CD4-positive, alpha-beta T cell (primary cell): ENCODE measurements at regions of chr21 and their contacts with region 1.

Region 1: GRCh38 chr21:33199516-33200217 is 30.1 kb upstream of the IFNAR2 start:
- DNase-seq: peak; percentile 63 to 93 (median 75)
- ATAC-seq: peak; percentile 93
- H3K4me3 ChIP-seq: no peak overlapping the region
- H3K4me3 Mint-ChIP-seq: no peak overlapping the region
- H3K27ac ChIP-seq: no peak overlapping the region
- H3K27ac Mint-ChIP-seq: peak overlapping the region; percentile 79
- H3K4me1 ChIP-seq: peaks cover 21% of the 10 kb centered on the region
- H3K4me1 Mint-ChIP-seq: peaks cover 55% of the 10 kb centered on the region
- H3K27me3 ChIP-seq: no peaks in the 10 kb centered on the region
- H3K27me3 Mint-ChIP-seq: no peaks in the 10 kb centered on the region
- CTCF ChIP-seq: peak; percentile 75

Region 2: DNA sequence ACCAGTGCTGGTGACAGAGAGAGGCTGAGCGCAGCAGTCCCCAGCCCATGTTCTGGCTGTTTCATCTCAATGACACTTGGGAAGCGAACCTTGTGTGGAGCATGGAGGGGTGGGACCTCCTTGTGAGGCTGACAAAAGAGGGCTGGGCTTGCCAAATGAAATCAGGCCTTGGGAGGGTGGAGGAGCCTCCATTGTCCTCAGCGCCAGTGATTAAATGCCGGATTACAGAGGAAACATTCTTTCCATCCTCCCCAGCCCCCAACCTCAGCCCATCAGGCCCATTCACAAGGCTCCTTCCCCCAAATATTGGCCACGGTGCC is 364.8 kb before region 1 on chr21:
- CTCF ChIA-PET with region 1: interaction called, 6 read pairs
- POLR2A ChIA-PET with region 1: interaction called, 3 read pairs
- intact Hi-C with region 1: loop called (anchors 1 to 2 kb)
- DNase-seq: no peak
- ATAC-seq: no peak
- H3K4me3 ChIP-seq: no peak overlapping the region
- H3K4me3 Mint-ChIP-seq: no peak overlapping the region
- H3K27ac ChIP-seq: no peak overlapping the region
- H3K27ac Mint-ChIP-seq: no peak overlapping the region
- H3K4me1 ChIP-seq: no peaks in the 10 kb centered on the region
- H3K4me1 Mint-ChIP-seq: no peaks in the 10 kb centered on the region
- H3K27me3 ChIP-seq: peaks cover 5 to 7% of the 10 kb centered on the region in 2 experiments
- H3K27me3 Mint-ChIP-seq: peaks cover 27% of the 10 kb centered on the region
- CTCF ChIP-seq: no peak

Region 3: GRCh38 chr21:32994305-32994704 is 205.4 kb before region 1 on chr21:
- CTCF ChIA-PET with region 1: interaction called, 3 read pairs
- POLR2A ChIA-PET with region 1: no interaction called
- intact Hi-C with region 1: loop called (anchors 1 to 2 kb)
- DNase-seq: peak in 2 of 14 experiments; percentile 25 to 27
- ATAC-seq: no peak
- H3K4me3 ChIP-seq: no peak overlapping the region
- H3K4me3 Mint-ChIP-seq: no peak overlapping the region
- H3K27ac ChIP-seq: no peak overlapping the region
- H3K27ac Mint-ChIP-seq: no peak overlapping the region
- H3K4me1 ChIP-seq: no peaks in the 10 kb centered on the region
- H3K4me1 Mint-ChIP-seq: no peaks in the 10 kb centered on the region
- H3K27me3 ChIP-seq: peaks cover 3 to 4% of the 10 kb centered on the region in 2 experiments
- H3K27me3 Mint-ChIP-seq: peaks cover 31% of the 10 kb centered on the region
- CTCF ChIP-seq: peak; percentile 56

Region 4: DNA sequence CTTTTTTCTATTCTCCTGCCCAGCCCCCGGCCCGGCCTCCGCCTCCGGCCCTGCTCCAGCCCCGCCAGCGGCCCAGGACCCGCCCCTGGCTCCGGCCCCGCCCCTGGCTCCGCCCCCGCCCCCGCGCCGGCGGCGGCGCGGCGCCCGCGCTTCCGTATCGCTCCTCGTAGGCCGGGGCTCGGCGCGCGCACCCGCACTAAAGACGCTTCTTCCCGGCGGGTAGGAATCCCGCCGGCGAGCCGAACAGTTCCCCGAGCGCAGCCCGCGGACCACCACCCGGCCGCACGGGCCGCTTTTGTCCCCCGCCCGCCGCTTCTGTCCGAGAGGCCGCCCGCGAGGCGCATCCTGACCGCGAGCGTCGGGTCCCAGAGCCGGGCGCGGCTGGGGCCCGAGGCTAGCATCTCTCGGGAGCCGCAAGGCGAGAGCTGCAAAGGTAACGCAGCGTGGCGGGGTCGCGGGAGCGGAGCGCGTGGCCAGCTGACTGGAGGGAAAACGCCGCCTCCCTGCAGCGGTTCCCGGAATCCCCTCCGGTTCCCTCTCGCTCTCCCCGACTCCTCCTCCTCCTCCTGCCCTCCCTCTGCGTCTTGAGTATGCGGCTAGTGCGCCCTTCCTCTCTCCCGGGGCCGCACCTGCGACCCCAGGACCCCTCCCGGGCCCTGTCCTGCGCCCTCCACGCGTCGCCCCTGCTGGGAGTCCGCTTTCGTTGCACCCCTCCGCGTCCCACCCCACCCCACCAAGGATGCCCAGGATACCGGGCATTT is 30.3 kb after region 1 on chr21 and contains the start of gene IFNAR2:
- CTCF ChIA-PET with region 1: interaction called, 13 read pairs
- POLR2A ChIA-PET with region 1: interaction called, 5 read pairs
- intact Hi-C with region 1: no loop called
- DNase-seq: peak; percentile 51 to 86 (median 71)
- ATAC-seq: peak; percentile 85
- H3K4me3 ChIP-seq: peak within 1 kb of the TSS; percentile 87
- H3K4me3 Mint-ChIP-seq: peak within 1 kb of the TSS; percentile 96
- H3K27ac ChIP-seq: peak within 1 kb of the TSS; percentile 60 to 87
- H3K27ac Mint-ChIP-seq: peak within 1 kb of the TSS; percentile 90
- H3K4me1 ChIP-seq: peaks cover 24% of the 10 kb centered on the region
- H3K4me1 Mint-ChIP-seq: peaks cover 48% of the 10 kb centered on the region
- H3K27me3 ChIP-seq: no peaks in the 10 kb centered on the region
- H3K27me3 Mint-ChIP-seq: no peaks in the 10 kb centered on the region
- CTCF ChIP-seq: no peak
- total RNA-seq, gene IFNAR2: 26.6 to 28.2 TPM

Region 5: DNA sequence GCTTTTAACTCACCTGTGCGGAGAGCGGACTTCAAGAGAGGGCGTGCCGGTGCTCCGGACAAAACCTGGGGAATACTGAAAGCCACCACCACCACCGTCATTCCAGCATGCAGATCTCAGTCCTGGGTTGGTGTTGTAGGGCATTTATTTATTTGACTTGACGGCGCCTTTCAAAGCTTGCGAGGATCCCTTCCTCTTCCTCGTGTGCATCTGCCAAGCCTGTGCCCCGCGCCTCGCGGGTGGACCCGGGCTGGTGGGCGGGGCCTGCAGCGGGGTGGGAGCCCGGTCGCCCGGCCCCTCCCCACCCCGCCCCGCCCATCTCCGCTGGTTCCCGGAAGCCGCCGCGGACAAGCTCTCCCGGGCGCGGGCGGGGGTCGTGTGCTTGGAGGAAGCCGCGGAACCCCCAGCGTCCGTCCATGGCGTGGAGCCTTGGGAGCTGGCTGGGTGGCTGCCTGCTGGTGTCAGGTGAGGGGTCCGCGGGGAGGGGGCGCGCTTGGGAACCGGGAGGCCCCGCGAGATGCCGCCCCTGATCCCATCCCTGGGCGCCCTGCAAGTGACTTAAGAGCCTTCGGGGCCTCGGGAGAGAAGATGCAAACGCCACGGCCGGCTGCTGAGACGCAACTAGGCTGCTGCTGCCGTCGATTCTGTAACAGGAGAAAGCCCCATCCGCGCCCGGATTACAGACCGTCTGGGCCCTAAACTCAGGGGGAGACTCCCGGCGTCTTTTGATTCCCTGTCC is 66.6 kb after region 1 on chr21 and contains the start of gene IL10RB:
- CTCF ChIA-PET with region 1: interaction called, 13 read pairs
- POLR2A ChIA-PET with region 1: interaction called, 11 read pairs
- intact Hi-C with region 1: loop called in 1 of 2 experiments (anchors 1 kb)
- DNase-seq: peak; percentile 47 to 89 (median 72)
- ATAC-seq: peak; percentile 71
- H3K4me3 ChIP-seq: peak within 1 kb of the TSS; percentile 98
- H3K4me3 Mint-ChIP-seq: peak within 1 kb of the TSS; percentile 99
- H3K27ac ChIP-seq: peak within 1 kb of the TSS; percentile 79 to 85
- H3K27ac Mint-ChIP-seq: peak within 1 kb of the TSS; percentile 94
- H3K4me1 ChIP-seq: peaks cover 62% of the 10 kb centered on the region
- H3K4me1 Mint-ChIP-seq: peaks cover 60% of the 10 kb centered on the region
- H3K27me3 ChIP-seq: no peaks in the 10 kb centered on the region
- H3K27me3 Mint-ChIP-seq: no peaks in the 10 kb centered on the region
- CTCF ChIP-seq: no peak
- total RNA-seq, gene IL10RB: 7.2 to 9.2 TPM

Region 6: DNA sequence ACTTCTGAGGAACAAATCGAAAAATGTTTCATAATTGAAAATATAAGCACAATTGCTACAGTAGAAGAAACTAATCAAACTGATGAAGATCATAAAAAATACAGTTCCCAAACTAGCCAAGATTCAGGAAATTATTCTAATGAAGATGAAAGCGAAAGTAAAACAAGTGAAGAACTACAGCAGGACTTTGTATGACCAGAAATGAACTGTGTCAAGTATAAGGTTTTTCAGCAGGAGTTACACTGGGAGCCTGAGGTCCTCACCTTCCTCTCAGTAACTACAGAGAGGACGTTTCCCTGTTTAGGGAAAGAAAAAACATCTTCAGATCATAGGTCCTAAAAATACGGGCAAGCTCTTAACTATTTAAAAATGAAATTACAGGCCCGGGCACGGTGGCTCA is 155.7 kb after region 1 on chr21:
- CTCF ChIA-PET with region 1: interaction called, 22 read pairs
- POLR2A ChIA-PET with region 1: interaction called, 30 read pairs
- intact Hi-C with region 1: loop called in 1 of 2 experiments (anchors 5 kb)
- DNase-seq: no peak
- ATAC-seq: no peak
- H3K4me3 ChIP-seq: no peak overlapping the region
- H3K4me3 Mint-ChIP-seq: no peak overlapping the region
- H3K27ac ChIP-seq: no peak overlapping the region
- H3K27ac Mint-ChIP-seq: peak overlapping the region; percentile 31
- H3K4me1 ChIP-seq: no peaks in the 10 kb centered on the region
- H3K4me1 Mint-ChIP-seq: peaks cover 15% of the 10 kb centered on the region
- H3K27me3 ChIP-seq: no peaks in the 10 kb centered on the region
- H3K27me3 Mint-ChIP-seq: no peaks in the 10 kb centered on the region
- CTCF ChIP-seq: no peak

Region 7: DNA sequence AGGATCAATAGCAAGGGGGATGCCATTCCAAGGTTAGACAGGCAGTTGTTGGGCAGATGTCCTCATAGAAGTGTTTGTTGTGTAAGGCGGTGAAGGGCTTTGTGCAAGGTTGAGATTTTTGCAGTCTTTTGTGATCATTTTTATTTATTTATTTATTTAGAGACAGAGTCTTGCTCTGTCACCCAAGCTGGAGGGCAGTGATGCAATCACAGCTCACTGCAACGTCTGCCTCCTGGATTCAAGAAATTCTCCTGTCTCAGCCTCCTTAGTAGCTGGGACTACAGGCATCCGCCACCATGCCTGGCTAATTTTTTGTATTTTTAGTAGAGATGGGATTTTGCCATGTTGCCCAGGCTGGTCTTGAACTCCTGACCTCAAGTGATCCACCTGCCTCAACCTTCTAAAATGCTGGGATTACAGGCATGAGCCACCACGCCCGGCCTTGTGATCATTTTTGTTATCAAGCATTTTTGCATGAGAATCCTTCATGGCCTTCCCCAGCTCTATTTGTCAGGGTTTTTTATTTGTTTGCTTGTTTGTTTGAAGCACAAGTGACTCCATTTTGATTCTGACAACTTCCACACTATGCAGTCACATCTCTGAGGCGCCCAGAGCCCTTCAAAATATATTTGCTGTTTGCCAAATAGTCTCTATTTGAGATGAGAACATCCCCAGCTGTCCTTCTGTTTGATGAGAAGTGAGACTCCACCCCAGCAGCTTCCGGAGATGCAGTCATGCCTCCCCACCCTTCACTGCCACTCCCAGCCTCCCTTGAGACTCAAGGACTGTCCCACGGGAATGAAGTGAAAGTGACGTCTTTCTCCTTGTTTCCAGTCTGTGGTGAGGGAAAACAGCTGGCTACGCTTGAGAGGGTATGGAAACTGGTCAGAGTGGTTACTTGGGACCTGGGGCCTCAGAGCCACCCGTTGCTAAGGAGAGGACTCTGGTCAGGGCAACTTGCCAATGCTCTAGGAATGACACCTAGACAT is 242.1 kb after region 1 on chr21:
- CTCF ChIA-PET with region 1: interaction called, 18 read pairs
- POLR2A ChIA-PET with region 1: interaction called, 9 read pairs
- intact Hi-C with region 1: loop called (anchors 1 kb)
- DNase-seq: no peak
- ATAC-seq: no peak
- H3K4me3 ChIP-seq: no peak overlapping the region
- H3K4me3 Mint-ChIP-seq: no peak overlapping the region
- H3K27ac ChIP-seq: no peak overlapping the region
- H3K27ac Mint-ChIP-seq: no peak overlapping the region
- H3K4me1 ChIP-seq: no peaks in the 10 kb centered on the region
- H3K4me1 Mint-ChIP-seq: peaks cover 5% of the 10 kb centered on the region
- H3K27me3 ChIP-seq: no peaks in the 10 kb centered on the region
- H3K27me3 Mint-ChIP-seq: no peaks in the 10 kb centered on the region
- CTCF ChIP-seq: no peak

Region 8: DNA sequence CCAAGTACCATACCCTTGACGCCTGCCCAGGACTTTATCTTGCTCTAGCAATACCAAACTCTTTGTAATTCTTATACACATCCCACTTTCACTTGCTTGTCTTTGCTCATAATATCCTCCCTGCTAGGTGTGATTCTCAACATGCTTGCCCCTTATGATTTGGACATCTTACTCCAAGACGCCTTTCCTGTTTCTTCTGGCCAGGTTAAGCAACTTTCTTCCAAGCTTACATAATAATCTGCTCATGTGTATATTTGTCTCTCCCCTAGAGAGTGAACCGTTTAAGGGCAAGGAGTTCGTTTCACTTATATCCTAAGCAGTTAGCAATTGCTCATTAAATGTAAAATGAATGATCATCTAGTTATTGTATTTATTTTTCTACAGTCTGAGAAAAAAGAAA is 420.1 kb after region 1 on chr21:
- CTCF ChIA-PET with region 1: no interaction called
- POLR2A ChIA-PET with region 1: no interaction called
- intact Hi-C with region 1: no loop called
- DNase-seq: no peak
- ATAC-seq: no peak
- H3K4me3 ChIP-seq: no peak overlapping the region
- H3K4me3 Mint-ChIP-seq: no peak overlapping the region
- H3K27ac ChIP-seq: no peak overlapping the region
- H3K27ac Mint-ChIP-seq: no peak overlapping the region
- H3K4me1 ChIP-seq: no peaks in the 10 kb centered on the region
- H3K4me1 Mint-ChIP-seq: no peaks in the 10 kb centered on the region
- H3K27me3 ChIP-seq: no peaks in the 10 kb centered on the region
- H3K27me3 Mint-ChIP-seq: no peaks in the 10 kb centered on the region
- CTCF ChIP-seq: no peak